ENCODE measurements at regions of chr10 and their contacts with region 1.

Region 1: GRCh38 chr10:114470956-114471905 is 66.9 kb upstream of the AFAP1L2 start:
- DNase-seq: peak; percentile 51 to 60
- ATAC-seq: peak; percentile 55 to 86 (median 78)
- H3K4me3 ChIP-seq: no peak overlapping the region
- H3K27ac ChIP-seq: peak overlapping the region in 5 of 10 donors; percentile 3 to 39 (median 24)
- H3K4me1 ChIP-seq: peaks cover 0 to 48% (median 17%) of the 10 kb centered on the region in 9 donors
- H3K27me3 ChIP-seq: no peaks in the 10 kb centered on the region
- CTCF ChIP-seq: peak; percentile 80 to 95 (median 93)

Region 2: DNA sequence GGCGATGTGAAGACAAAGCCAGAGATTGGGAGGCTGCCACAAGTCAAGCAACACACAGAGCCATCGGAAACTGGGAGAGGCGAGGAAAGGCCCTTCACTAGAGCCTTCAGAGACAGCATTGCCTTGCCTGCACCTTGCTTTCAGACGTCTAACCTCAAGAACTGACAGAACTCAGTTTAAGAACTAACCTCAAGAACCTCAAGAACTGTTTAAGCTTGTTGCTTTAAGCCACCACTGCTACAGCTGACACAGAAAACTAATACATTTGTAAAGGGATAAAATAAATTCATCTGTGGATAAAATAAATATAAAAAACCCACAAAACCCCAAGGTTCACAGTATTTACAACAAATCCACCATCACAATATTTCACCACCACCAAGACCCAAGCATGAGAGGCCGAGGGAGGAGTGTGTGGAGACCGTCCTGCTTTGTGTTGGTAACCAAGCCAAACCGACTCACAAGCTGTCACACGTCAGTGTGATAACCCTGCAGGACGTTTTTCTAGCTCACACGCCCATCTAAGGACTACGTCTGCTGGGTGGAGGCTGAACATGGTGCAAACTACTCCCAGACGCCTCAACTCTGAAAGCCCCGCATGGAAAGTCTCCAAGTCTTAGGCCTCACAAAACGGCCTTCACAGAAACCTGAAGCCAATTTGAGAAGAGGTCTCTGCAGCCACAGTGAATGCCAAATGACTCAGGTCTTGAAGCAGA is 70.0 kb after region 1 on chr10:
- intact Hi-C with region 1: loop called in 8 of 10 experiments (anchors 2 to 5 kb)
- DNase-seq: peak; percentile 41 to 80
- ATAC-seq: peak; percentile 83 to 95 (median 91)
- H3K4me3 ChIP-seq: no peak overlapping the region
- H3K27ac ChIP-seq: peak overlapping the region; percentile 13 to 87 (median 74)
- H3K4me1 ChIP-seq: peaks cover 16 to 82% (median 65%) of the 10 kb centered on the region in 9 donors
- H3K27me3 ChIP-seq: no peaks in the 10 kb centered on the region
- CTCF ChIP-seq: no peak

Region 3: DNA sequence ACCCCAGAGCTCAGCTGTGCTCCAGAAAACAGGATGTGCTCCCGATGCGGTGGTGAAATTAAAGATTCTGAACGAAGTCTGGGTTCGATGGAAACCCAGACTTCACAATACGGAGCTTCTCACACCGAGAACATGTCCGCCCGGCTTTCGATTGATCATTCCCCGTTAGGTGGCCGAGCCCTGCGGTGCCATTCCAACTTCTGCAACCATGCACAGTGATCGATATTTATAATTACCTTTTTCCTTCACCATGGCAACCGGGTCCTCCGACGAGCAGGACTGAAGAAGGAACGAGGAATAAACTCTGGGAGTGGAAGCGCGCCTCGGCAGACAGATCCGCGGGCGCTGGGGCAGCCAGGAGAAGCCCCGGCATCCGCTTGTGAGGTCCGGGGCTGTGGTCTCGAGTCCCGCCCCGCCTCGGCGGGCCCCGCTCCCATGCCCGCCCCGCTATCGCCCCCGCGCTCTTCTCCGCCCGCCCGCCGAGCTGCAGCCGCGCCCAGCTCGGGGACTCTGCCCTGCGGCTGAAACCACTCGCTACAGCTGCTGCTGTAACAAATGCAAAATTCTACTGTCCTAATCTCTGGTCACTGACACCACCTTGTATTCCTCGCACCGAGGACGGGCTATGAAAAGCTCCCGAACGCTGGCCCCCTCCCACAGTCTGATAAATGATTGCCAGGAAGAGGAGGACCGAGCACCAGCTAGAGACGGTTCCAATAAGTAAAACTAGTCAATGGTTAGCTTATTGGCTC is 160.6 kb after region 1 on chr10:
- intact Hi-C with region 1: loop called in 1 of 10 experiments (anchors 10 kb)
- DNase-seq: peak; percentile 57 to 58
- ATAC-seq: peak; percentile 58 to 69 (median 61)
- H3K4me3 ChIP-seq: peak overlapping the region; percentile 45 to 80 (median 62)
- H3K27ac ChIP-seq: peak overlapping the region; percentile 81 to 95 (median 86)
- H3K4me1 ChIP-seq: peaks cover 8 to 93% (median 62%) of the 10 kb centered on the region in 9 donors
- H3K27me3 ChIP-seq: peaks cover 0 to 37% (median 0%) of the 10 kb centered on the region in 7 donors
- CTCF ChIP-seq: peak in 1 of 9 donors; percentile 13

Region 4: GRCh38 chr10:114694752-114695151 is 223.5 kb after region 1 on chr10:
- intact Hi-C with region 1: loop called in 6 of 10 experiments (anchors 5 to 10 kb)
- DNase-seq: no peak
- ATAC-seq: no peak
- H3K4me3 ChIP-seq: no peak overlapping the region
- H3K27ac ChIP-seq: peak overlapping the region in 5 of 10 donors; percentile 29 to 84 (median 77)
- H3K4me1 ChIP-seq: peaks cover 0 to 85% (median 49%) of the 10 kb centered on the region in 9 donors
- H3K27me3 ChIP-seq: no peaks in the 10 kb centered on the region
- CTCF ChIP-seq: peak in 7 of 9 donors; percentile 32 to 58 (median 48)

Region 5: DNA sequence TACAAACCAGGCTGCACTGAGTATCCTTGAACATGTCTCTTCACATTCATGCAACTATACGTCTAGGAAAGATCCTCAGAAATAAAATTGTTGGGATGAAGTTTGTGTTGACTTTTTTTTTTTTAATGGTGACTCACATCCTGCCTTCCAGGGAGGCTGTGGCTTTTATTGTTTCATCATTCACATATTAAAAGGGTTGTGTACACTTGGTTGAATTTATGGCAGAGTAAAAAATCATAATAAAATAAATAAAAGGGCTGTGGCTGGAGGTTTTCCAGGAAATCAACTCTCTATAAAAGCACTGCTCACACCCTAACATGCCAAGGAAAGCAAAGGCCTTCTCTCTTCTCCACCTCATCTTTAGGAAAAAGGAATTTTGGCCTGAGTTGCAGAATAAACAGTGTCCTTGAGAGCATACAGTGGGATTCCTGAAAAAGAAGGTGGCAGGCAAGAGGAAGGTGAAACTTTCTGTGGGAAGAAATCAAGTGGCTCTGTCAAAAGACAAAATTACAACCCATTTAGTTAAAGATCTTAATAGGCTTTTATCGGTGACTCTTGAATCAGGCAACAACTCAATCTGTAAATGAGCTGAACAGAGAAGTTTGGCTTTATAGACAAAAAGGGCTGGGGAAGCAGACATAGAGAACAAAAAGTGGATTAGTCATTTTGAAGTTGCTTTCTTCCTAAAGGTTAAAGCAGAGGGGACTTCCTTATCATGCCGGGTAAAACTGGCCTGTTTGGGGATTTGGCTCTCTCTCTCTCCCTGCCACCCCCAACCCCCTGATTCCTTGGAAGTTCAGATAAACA is 308.8 kb after region 1 on chr10:
- intact Hi-C with region 1: loop called in 7 of 10 experiments (anchors 5 kb)
- DNase-seq: no peak
- ATAC-seq: peak in 5 of 8 donors; percentile 38 to 76 (median 51)
- H3K4me3 ChIP-seq: no peak overlapping the region
- H3K27ac ChIP-seq: peak overlapping the region in 7 of 10 donors; percentile 16 to 51 (median 37)
- H3K4me1 ChIP-seq: peaks cover 0 to 37% (median 13%) of the 10 kb centered on the region in 9 donors
- H3K27me3 ChIP-seq: no peaks in the 10 kb centered on the region
- CTCF ChIP-seq: no peak

Region 6: GRCh38 chr10:114821293-114821914 is 350.2 kb after region 1 on chr10 and contains the start of gene FHIP2A:
- intact Hi-C with region 1: loop called in 3 of 10 experiments (anchors 10 kb)
- DNase-seq: peak; percentile 78 to 86
- ATAC-seq: peak; percentile 78 to 97 (median 88)
- H3K4me3 ChIP-seq: peak within 1 kb of the TSS; percentile 66 to 98 (median 86)
- H3K27ac ChIP-seq: peak within 1 kb of the TSS; percentile 95 to 99 (median 97)
- H3K4me1 ChIP-seq: peaks cover 4 to 44% (median 39%) of the 10 kb centered on the region in 9 donors
- H3K27me3 ChIP-seq: no peaks in the 10 kb centered on the region
- CTCF ChIP-seq: peak; percentile 37 to 85 (median 66)
- total RNA-seq, gene FHIP2A: 19.1 to 36.6 (median 27.7) TPM

Measured in heart right ventricle (tissue), 16 donors.